ENCODE measurements at regions of chr21 and their contacts with region 1.

Region 1: GRCh38 chr21:29849735-29850176 is 90.0 kb downstream of the GRIK1 start:
- H3K4me3 Mint-ChIP-seq: no peak overlapping the region
- H3K27ac Mint-ChIP-seq: no peak overlapping the region
- H3K4me1 Mint-ChIP-seq: no peaks in the 10 kb centered on the region
- H3K27me3 Mint-ChIP-seq: no peaks in the 10 kb centered on the region

Region 2: GRCh38 chr21:29091032-29091431 is 758.7 kb before region 1 on chr21:
- intact Hi-C with region 1: loop called (anchors 2 kb)
- H3K4me3 Mint-ChIP-seq: no peak overlapping the region
- H3K27ac Mint-ChIP-seq: no peak overlapping the region
- H3K4me1 Mint-ChIP-seq: peaks cover 41% of the 10 kb centered on the region
- H3K27me3 Mint-ChIP-seq: no peaks in the 10 kb centered on the region

Region 3: GRCh38 chr21:29477941-29478340 is 371.8 kb before region 1 on chr21:
- intact Hi-C with region 1: loop called (anchors 1 kb)
- H3K4me3 Mint-ChIP-seq: no peak overlapping the region
- H3K27ac Mint-ChIP-seq: no peak overlapping the region
- H3K4me1 Mint-ChIP-seq: peaks cover 5% of the 10 kb centered on the region
- H3K27me3 Mint-ChIP-seq: no peaks in the 10 kb centered on the region

Region 4: DNA sequence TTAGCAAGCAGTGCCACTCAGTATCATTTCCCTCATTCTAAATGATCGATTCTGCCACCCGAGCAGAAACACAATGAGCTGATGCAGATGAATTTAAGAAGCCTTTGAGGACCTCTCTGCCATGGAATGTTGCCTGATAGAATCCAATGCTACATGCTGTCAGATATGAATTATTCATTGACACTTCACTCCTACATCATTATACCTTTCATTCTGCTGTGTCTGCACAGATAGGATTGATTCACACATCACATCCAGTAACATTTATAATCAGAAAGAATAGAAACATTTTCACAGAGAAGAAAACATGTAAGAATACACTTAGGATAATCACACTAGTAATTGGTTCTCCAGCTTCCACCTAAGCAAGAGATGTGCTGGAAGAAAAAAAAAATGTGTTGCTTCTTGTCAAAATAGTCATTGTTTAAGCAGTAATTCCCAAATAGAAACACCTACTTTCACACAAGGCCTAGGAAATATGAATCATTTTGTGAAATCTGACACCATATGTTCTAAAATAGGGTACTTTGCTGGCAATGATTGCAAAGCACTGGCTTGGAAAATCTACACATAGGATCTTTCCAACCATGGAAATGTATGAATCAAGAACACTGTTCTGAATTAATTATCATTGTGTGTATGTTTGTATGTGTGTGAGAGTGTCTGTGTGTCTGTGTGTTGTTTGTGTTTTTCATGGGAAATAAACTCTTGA is 20.0 kb before region 1 on chr21:
- intact Hi-C with region 1: no loop called
- H3K4me3 Mint-ChIP-seq: no peak overlapping the region
- H3K27ac Mint-ChIP-seq: no peak overlapping the region
- H3K4me1 Mint-ChIP-seq: no peaks in the 10 kb centered on the region
- H3K27me3 Mint-ChIP-seq: no peaks in the 10 kb centered on the region

Region 5: DNA sequence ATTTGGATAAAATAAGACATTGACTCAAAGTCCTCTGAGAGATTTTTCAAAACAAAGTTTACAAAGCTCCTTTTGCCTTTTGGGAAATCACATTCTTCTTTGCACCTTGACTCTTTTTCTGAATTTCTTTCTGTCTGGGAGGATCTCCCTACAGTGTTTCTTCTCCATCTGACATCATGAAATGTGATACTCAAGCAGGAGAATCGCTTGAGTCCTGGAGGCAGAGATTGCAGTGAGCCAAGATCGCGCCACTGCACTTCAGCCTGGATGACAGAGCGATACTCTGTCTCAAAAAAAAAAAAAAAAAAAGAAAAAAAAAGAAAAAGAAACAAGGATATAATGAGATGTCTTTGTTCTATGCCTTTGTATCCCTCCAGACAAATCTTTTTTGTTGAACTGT is 103.3 kb after region 1 on chr21:
- intact Hi-C with region 1: no loop called
- H3K4me3 Mint-ChIP-seq: no peak overlapping the region
- H3K27ac Mint-ChIP-seq: no peak overlapping the region
- H3K4me1 Mint-ChIP-seq: no peaks in the 10 kb centered on the region
- H3K27me3 Mint-ChIP-seq: peaks cover 1% of the 10 kb centered on the region

Measured in dendritic cell treated with granulocyte-macrophage colony-stimulating factor and Interleukin-4, amounts not matched to agents 40 ng/mL and 50 ng/mL, for 4 days (primary cell).